Calu3 (cell line): ENCODE measurements at regions of chr5 and their contacts with region 1.

Region 1: DNA sequence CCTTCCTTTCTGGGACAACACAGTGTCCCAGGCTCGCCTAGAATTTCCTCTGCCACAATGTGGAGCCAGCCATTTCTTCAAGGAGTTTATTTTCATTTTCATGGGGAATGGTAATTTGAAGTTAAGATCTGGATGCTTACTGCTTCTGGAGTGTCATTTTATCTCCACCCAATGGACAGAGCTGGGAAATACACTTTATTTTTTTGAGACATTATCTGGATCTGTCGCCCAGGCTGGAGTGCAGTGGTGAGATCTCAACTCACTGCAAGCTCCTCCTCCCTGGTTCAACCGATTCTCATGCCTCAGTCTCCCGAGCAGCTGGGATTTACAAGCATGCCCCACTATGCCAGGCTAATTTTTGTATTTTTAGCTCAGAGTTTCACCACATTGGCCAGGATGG is 12.7 kb upstream of the THG1L start:
- DNase-seq: peak; percentile 27
- H3K4me3 Mint-ChIP-seq: no peak overlapping the region
- H3K27ac Mint-ChIP-seq: no peak overlapping the region
- H3K4me1 Mint-ChIP-seq: no peaks in the 10 kb centered on the region
- H3K27me3 Mint-ChIP-seq: no peaks in the 10 kb centered on the region
- CTCF ChIP-seq: no peak

Region 2: DNA sequence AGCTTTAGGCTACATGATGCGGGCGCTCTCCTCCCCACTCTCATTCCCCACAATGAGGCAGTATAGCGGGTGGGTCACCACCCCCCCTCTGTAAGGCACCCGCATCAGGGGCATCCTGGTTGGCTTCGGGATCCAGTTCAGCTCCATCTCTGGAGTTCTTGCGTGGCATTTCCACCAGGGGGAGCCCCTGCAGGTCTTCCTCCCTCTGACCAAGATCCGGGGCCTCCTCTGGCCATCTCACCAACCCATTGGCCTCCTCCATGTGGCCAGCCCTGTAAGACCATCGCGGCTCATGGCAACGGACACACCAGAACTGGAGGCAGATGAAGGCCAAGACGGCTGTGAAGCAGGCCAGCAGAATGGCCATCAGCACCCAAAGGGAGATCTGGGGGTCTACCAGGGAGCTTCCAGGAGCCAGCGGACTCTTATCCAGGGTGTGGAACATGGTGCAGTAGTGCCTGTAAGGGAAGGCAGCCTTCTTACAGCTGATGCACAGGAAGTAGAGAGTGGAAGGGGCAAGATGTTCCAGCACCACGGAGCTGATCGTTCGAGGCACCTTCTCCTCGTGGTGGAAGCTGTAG is 375.6 kb before region 1 on chr5:
- CTCF ChIA-PET with region 1: interaction called, 4 read pairs
- intact Hi-C with region 1: loop called (anchors 5 kb)
- DNase-seq: peak; percentile 70
- H3K4me3 Mint-ChIP-seq: no peak overlapping the region
- H3K27ac Mint-ChIP-seq: no peak overlapping the region
- H3K4me1 Mint-ChIP-seq: no peaks in the 10 kb centered on the region
- H3K27me3 Mint-ChIP-seq: no peaks in the 10 kb centered on the region
- CTCF ChIP-seq: peak; percentile 68

Region 3: GRCh38 chr5:157431544-157432200 is 286.8 kb before region 1 on chr5:
- CTCF ChIA-PET with region 1: interaction called, 4 read pairs
- intact Hi-C with region 1: loop called (anchors 1 kb)
- DNase-seq: peak; percentile 52
- H3K4me3 Mint-ChIP-seq: no peak overlapping the region
- H3K27ac Mint-ChIP-seq: no peak overlapping the region
- H3K4me1 Mint-ChIP-seq: no peaks in the 10 kb centered on the region
- H3K27me3 Mint-ChIP-seq: peaks cover 3% of the 10 kb centered on the region
- CTCF ChIP-seq: peak; percentile 48

Region 4: DNA sequence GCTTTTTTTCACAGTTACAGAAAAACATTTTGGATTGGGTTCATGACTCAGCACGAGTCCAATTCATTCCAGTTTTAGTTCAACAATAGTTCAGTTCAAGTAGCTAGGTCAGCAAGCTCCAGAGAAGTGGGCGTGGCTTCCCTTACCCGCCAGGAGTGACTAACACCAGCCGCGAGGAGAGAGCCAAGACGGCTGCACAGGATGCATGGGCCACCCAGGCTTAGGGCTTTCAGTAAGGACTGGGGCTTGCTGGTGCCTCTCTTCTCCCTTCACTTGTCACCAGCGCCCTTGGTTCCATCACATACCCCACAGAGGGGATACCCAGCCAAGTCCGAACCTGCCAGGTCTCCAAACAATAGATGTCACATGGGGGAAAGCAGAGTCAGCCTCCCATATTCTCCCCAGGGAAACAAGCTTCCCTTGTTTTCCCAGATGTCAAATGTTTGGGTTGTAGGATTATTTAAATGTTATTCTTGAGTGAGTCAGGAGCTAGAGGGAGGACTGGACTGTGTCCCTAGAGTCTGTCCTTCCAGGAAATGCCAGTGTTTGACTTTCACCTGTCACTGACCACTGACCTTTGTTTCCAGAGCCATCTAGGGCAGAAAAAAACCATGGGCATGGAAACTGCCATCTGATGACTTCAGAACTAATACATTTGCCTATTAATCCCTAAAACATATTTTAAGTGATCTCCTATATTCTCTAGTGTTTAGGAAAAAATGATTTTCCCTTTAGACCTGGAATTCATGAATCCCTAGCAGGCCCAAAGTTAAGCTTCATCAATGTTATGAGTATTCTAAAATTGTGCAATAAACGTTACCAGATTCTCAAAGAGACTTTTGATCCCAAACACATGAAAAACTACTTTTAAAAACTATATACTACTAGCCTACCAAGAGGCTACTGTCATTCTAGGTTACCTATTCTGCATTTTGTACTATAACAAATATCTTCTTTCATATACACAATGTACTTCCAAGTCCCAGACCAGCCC is 206.6 kb before region 1 on chr5:
- CTCF ChIA-PET with region 1: interaction called, 4 read pairs
- intact Hi-C with region 1: loop called (anchors 10 kb)
- DNase-seq: peak; percentile 91
- H3K4me3 Mint-ChIP-seq: peak overlapping the region; percentile 29
- H3K27ac Mint-ChIP-seq: peak overlapping the region; percentile 28
- H3K4me1 Mint-ChIP-seq: peaks cover 23% of the 10 kb centered on the region
- H3K27me3 Mint-ChIP-seq: no peaks in the 10 kb centered on the region
- CTCF ChIP-seq: no peak

Region 5: GRCh38 chr5:157613385-157614245 is 104.9 kb before region 1 on chr5:
- CTCF ChIA-PET with region 1: no interaction called
- intact Hi-C with region 1: no loop called
- DNase-seq: no peak
- H3K4me3 Mint-ChIP-seq: no peak overlapping the region
- H3K27ac Mint-ChIP-seq: no peak overlapping the region
- H3K4me1 Mint-ChIP-seq: no peaks in the 10 kb centered on the region
- H3K27me3 Mint-ChIP-seq: no peaks in the 10 kb centered on the region
- CTCF ChIP-seq: no peak

Region 6: GRCh38 chr5:157665467-157666100 is 52.9 kb before region 1 on chr5:
- CTCF ChIA-PET with region 1: interaction called, 3 read pairs
- intact Hi-C with region 1: loop called (anchors 1 kb)
- DNase-seq: peak; percentile 63
- H3K4me3 Mint-ChIP-seq: no peak overlapping the region
- H3K27ac Mint-ChIP-seq: no peak overlapping the region
- H3K4me1 Mint-ChIP-seq: peaks cover 19% of the 10 kb centered on the region
- H3K27me3 Mint-ChIP-seq: no peaks in the 10 kb centered on the region
- CTCF ChIP-seq: no peak

Region 7: DNA sequence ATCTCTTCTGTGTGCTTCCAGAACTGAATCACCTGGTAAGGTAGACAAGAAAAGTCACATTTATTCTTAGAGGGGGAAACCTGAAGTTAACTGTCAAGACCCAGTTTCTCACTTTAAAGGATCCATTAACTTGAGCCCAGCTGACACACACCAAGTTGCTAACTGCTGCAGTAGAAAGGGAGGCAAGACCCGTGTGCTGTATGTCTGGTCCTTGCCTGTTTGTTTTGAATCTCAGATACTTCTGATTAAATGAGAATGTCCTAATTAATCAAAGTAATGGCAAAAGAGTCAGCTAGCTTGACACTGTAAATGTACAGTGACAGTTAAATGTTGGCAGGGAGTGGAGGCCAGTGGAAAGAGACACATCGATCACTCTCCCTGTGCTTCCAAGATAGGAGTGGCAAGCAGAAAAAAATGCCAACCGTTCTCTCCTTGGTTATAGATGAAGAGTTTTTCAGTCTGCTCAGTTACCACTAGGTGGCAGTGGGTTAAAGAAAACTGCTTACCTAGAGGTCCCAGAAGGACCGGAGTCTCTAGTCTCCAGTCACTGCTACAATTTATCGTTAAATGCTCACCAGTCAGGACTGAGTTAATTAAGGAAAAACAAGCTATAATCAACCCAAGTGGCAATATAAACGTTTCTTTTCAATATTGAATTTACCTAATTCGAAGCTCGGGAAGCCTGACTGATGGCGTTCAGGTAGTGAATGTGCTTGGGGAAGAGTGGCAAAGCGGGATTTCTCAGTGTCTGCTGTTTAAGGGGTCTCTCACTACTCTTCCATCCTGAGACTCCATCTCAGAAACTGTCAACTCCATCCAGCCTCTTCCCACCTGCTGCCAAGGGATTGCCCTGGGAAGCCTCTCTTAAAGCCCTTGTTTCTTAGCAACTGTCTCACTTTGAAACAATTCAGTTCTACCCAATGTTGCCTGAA is 43.4 kb after region 1 on chr5:
- CTCF ChIA-PET with region 1: no interaction called
- intact Hi-C with region 1: no loop called
- DNase-seq: peak; percentile 62
- H3K4me3 Mint-ChIP-seq: no peak overlapping the region
- H3K27ac Mint-ChIP-seq: no peak overlapping the region
- H3K4me1 Mint-ChIP-seq: no peaks in the 10 kb centered on the region
- H3K27me3 Mint-ChIP-seq: no peaks in the 10 kb centered on the region
- CTCF ChIP-seq: peak; percentile 58

Region 8: GRCh38 chr5:158313733-158314464 is 595.4 kb after region 1 on chr5:
- CTCF ChIA-PET with region 1: no interaction called
- intact Hi-C with region 1: no loop called
- DNase-seq: no peak
- H3K4me3 Mint-ChIP-seq: no peak overlapping the region
- H3K27ac Mint-ChIP-seq: no peak overlapping the region
- H3K4me1 Mint-ChIP-seq: no peaks in the 10 kb centered on the region
- H3K27me3 Mint-ChIP-seq: no peaks in the 10 kb centered on the region
- CTCF ChIP-seq: no peak